ENCODE measurements at regions of chr10 and their contacts with region 1.

Region 1: DNA sequence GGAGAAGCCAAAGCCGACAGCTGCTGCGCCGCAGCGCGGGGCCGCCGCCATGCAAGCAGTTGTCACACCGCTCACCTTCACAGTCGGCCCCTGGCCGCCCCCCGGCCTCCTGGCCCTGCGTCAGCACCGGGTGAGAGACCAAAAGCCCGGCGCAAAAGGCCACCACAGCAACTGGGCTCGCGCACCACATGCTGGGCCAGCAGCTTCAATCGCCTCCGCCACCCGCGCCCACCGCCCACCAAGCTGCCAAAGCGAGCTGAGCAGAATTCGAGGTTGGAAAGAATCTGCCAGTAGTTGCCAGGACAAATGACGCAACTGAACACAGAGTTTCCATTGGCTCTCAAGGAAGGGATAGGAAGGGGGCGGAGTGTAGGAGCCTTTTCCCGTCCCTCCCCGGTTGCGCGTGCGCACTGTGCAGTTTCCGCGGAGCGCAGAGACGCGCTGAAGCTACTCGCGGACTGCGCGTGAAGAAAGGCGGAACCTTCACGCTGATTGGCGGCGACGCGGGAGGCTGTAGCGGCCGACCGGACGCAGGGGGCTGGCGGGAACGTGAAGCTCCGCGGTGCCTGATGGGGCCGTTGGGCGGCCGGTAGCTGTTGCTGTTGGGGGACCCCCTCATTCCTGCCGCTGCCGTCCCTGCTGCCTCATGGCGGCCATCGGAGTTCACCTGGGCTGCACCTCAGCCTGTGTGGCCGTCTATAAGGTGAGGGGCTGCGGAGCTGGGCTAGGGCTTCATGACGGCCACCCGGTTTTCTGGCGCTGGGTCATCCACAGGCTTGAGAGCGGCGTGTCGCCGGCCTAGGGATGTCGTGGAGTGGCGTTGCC is at the starts of genes CDNF, HSPA14 and MSANTD7:
- DNase-seq: peak; percentile 99
- ATAC-seq: peak; percentile 95
- H3K4me3 Mint-ChIP-seq: peak within 1 kb of the TSS; percentile 91
- H3K27ac Mint-ChIP-seq: peak within 1 kb of the TSS; percentile 95
- H3K4me1 Mint-ChIP-seq: peaks cover 21% of the 10 kb centered on the region
- H3K27me3 Mint-ChIP-seq: no peaks in the 10 kb centered on the region
- total RNA-seq, gene CDNF: 0.82 to 1.0 TPM
- total RNA-seq, gene HSPA14: 23.0 to 25.1 TPM
- total RNA-seq, gene MSANTD7: 17.0 to 19.4 TPM

Region 2: GRCh38 chr10:14859775-14860174 is 21.8 kb after region 1 on chr10:
- POLR2A ChIA-PET with region 1: no interaction called
- DNase-seq: no peak
- ATAC-seq: no peak
- H3K4me3 Mint-ChIP-seq: no peak overlapping the region
- H3K27ac Mint-ChIP-seq: no peak overlapping the region
- H3K4me1 Mint-ChIP-seq: peaks cover 3% of the 10 kb centered on the region
- H3K27me3 Mint-ChIP-seq: no peaks in the 10 kb centered on the region

Region 3: DNA sequence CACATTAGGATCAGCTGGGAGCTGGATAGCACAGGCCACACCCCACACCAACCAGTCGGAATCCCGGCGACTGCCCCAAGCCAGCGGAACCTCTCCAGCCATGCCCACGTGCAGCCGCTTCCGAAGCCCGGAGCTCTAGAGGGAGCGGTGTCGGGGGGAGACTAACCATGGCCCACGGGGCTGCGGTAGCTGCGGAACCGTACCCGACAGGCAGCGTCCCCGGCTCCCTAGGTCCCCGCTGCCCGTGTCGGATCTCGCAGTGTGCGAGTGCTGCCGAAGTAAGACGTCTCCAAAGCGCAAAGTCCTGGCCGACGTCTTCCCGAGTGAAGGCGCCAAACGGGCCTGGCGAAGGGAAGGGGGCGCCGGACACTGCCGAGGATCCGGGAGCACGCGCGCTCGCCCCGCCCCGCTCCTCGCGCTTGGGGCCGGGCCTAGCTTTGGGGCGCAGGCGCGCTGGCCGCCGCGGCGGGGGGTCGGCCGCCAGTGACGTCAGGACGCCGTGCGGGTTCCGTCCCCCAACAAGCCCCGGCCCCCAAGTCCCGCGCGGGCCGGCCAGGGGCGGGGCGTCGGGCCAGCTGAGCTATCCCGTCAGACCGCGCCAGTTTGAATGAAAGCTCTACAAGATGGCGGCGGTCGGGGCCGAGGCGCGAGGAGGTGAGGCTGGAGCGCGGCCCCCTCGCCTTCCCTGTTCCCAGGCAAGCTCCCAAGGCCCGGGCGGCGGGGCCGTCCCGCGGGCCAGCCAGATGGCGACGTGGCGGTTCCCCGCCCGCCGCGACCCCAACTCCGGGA is 40.5 kb after region 1 on chr10 and contains the start of gene SUV39H2:
- POLR2A ChIA-PET with region 1: interaction called, 38 read pairs
- DNase-seq: peak; percentile 98
- ATAC-seq: peak; percentile 93
- H3K4me3 Mint-ChIP-seq: peak within 1 kb of the TSS; percentile 96
- H3K27ac Mint-ChIP-seq: peak within 1 kb of the TSS; percentile 89
- H3K4me1 Mint-ChIP-seq: peaks cover 24% of the 10 kb centered on the region
- H3K27me3 Mint-ChIP-seq: no peaks in the 10 kb centered on the region
- total RNA-seq, gene SUV39H2: 19.4 to 22.3 TPM

Region 4: GRCh38 chr10:14954001-14954770 is 116.2 kb after region 1 on chr10 and contains the start of gene DCLRE1C:
- POLR2A ChIA-PET with region 1: interaction called, 22 read pairs
- DNase-seq: peak; percentile 93
- ATAC-seq: peak; percentile 95
- H3K4me3 Mint-ChIP-seq: peak within 1 kb of the TSS; percentile 89
- H3K27ac Mint-ChIP-seq: peak within 1 kb of the TSS; percentile 89
- H3K4me1 Mint-ChIP-seq: peaks cover 49% of the 10 kb centered on the region
- H3K27me3 Mint-ChIP-seq: no peaks in the 10 kb centered on the region
- total RNA-seq, gene DCLRE1C: 47.1 to 47.7 TPM

Region 5: DNA sequence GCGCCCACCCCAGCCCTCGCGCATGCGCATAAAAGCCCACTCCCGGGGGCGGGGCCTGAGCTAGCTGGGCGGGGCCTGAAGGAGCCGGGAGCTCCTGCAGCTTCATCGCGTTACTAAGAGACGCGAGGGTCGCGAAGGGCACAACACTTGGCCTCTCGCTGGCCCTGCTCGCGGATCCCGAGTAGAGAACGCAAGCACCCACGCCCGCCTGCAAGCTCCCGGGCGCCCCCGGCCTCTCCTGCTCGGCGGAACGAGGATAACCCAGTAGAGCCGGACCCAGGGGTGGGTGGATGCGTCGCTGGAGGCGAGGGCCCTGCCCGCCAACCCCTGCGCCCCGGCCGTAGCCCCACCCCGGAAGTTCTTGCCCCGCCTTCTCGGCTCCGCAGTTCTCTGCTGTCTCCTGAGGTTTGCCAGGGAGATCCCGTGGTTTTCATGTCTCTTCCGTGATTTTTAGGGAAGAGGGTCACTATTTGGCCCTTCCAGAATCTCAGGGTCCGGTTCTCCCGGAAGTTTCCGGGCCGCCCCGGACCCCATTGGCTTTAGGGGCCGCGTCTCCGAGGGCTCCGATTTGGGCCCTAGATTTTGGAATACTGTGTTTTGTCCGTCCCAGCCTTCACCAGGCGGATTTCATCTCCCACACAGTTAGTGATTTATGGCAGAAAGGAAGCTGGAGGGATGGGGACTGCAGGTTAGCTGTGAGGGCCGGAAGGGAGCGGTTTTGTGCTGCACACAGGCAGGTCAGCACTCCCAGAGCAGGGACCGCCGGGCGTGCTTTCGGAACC is 121.5 kb after region 1 on chr10 and contains the start of gene MEIG1:
- POLR2A ChIA-PET with region 1: interaction called, 22 read pairs
- DNase-seq: peak; percentile 100
- ATAC-seq: peak; percentile 91
- H3K4me3 Mint-ChIP-seq: peak within 1 kb of the TSS; percentile 82
- H3K27ac Mint-ChIP-seq: peak within 1 kb of the TSS; percentile 95
- H3K4me1 Mint-ChIP-seq: peaks cover 26% of the 10 kb centered on the region
- H3K27me3 Mint-ChIP-seq: no peaks in the 10 kb centered on the region
- total RNA-seq, gene MEIG1: 0.78 to 0.88 TPM

Region 6: DNA sequence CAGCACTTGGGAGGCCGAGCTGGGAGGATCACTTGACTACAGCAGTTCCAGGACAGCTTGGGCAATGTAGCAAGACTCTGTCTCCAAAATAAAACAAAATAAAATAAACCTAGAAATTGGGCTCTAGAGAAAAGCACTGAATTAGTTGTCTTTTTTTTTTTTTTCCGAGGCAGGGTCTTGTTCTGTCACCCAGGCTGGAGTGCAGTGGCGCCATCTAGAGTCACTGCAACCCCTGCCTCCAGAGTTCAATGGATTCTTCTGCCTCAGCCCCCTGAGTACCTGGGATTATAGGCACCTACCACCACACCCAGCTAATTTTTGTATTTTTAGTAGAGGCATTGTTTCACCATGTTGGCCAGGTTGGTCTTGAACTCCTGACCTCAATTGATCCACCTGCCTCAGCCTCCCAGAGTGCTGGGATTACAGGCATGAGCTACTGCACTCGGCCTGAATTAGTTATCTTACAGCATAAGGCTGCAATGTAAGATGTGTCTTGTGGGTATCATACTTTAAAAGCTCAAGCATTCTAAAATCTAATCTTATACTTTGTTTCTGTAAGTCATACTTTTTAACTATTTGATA is 134.0 kb after region 1 on chr10:
- POLR2A ChIA-PET with region 1: no interaction called
- DNase-seq: peak; percentile 62
- ATAC-seq: no peak
- H3K4me3 Mint-ChIP-seq: no peak overlapping the region
- H3K27ac Mint-ChIP-seq: no peak overlapping the region
- H3K4me1 Mint-ChIP-seq: peaks cover 9% of the 10 kb centered on the region
- H3K27me3 Mint-ChIP-seq: peaks cover 9% of the 10 kb centered on the region